Psoas muscle (tissue), 8 donors: ENCODE measurements at regions of chr17 and their contacts with region 1.

Region 1: DNA sequence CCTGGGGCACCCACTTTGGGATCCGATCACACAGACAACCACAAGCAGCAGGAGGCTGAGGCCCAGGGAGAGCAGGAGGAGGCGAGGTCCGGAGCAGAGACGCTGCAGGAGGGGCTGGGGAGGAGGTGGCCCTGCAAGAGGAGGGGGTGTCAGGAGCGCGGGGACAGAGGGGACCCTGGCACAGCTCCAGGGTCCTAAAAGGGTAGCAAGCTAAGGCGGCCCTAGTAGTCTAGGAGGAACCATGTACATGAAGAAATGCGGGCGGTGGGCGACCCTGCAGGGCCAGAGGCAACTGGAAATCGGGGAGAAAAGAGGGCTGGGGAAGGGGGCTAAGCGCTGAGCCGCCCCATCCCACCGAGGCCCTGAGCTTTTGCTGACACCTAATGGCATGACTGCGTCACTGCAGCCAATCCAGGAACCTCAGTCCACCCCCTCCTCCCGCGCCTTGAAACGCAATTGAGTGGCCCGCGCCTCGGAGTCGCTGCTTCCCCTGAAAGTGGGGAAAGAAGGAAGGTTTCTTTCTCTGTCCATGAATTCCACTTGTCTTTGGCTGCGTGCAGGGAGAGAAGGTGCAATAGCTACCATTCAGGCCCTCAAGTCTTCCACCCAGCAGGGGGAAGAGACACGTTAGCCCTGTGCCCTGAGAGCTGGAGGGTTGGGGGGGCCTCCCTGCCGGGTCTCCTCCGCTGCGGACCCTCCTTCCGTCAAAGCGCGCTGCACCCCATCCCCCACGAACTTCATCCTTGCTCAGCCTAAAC is 1.8 kb downstream of the ASGR1 start:
- DNase-seq: peak; percentile 55 to 77
- ATAC-seq: peak; percentile 55 to 88 (median 72)
- H3K4me3 ChIP-seq: peak overlapping the region; percentile 56
- H3K27ac ChIP-seq: no peak overlapping the region
- H3K4me1 ChIP-seq: peaks cover 8% of the 10 kb centered on the region
- H3K27me3 ChIP-seq: peaks cover 0 to 55% (median 14%) of the 10 kb centered on the region in 3 donors
- CTCF ChIP-seq: peak; percentile 75

Region 2: GRCh38 chr17:7004398-7005253 is 172.7 kb before region 1 on chr17:
- intact Hi-C with region 1: no loop called
- DNase-seq: peak in 1 of 2 donors; percentile 49
- ATAC-seq: peak; percentile 60 to 86 (median 76)
- H3K4me3 ChIP-seq: no peak overlapping the region
- H3K27ac ChIP-seq: no peak overlapping the region
- H3K4me1 ChIP-seq: no peaks in the 10 kb centered on the region
- H3K27me3 ChIP-seq: no peaks in the 10 kb centered on the region
- CTCF ChIP-seq: peak; percentile 64

Region 3: GRCh38 chr17:7045909-7046724 is 131.3 kb before region 1 on chr17:
- intact Hi-C with region 1: loop called in 1 of 2 experiments (anchors 5 kb)
- DNase-seq: no peak
- ATAC-seq: peak in 3 of 4 donors; percentile 22 to 72 (median 46)
- H3K4me3 ChIP-seq: peak overlapping the region; percentile 57
- H3K27ac ChIP-seq: no peak overlapping the region
- H3K4me1 ChIP-seq: peaks cover 21% of the 10 kb centered on the region
- H3K27me3 ChIP-seq: peaks cover 0 to 29% (median 10%) of the 10 kb centered on the region in 3 donors
- CTCF ChIP-seq: peak; percentile 81